ENCODE measurements at regions of chr6 and their contacts with region 1.

Region 1: GRCh38 chr6:97508646-97509045 is 225.6 kb upstream of the MMS22L start:
- DNase-seq: no peak
- H3K4me3 ChIP-seq: no peak overlapping the region
- H3K27ac ChIP-seq: no peak overlapping the region
- H3K4me1 ChIP-seq: no peaks in the 10 kb centered on the region
- H3K27me3 ChIP-seq: no peaks in the 10 kb centered on the region
- CTCF ChIP-seq: no peak
- EP300 ChIP-seq: no peak
- POLR2A ChIP-seq: no peak
- RAD21 ChIP-seq: no peak

Region 2: GRCh38 chr6:97497713-97498331 is 10.8 kb before region 1 on chr6:
- CTCF ChIA-PET with region 1: interaction called, 12 read pairs
- POLR2A ChIA-PET with region 1: no interaction called
- DNase-seq: peak; percentile 7 to 73
- H3K4me3 ChIP-seq: no peak overlapping the region
- H3K27ac ChIP-seq: no peak overlapping the region
- H3K4me1 ChIP-seq: no peaks in the 10 kb centered on the region
- H3K27me3 ChIP-seq: no peaks in the 10 kb centered on the region
- CTCF ChIP-seq: peak; percentile 66 to 89 (median 77)
- EP300 ChIP-seq: no peak
- POLR2A ChIP-seq: no peak
- RAD21 ChIP-seq: peak; percentile 77 to 82

Region 3: GRCh38 chr6:97524811-97525210 is 16.2 kb after region 1 on chr6:
- CTCF ChIA-PET with region 1: interaction called, 14 read pairs
- POLR2A ChIA-PET with region 1: no interaction called
- DNase-seq: peak; percentile 53 to 72
- H3K4me3 ChIP-seq: no peak overlapping the region
- H3K27ac ChIP-seq: no peak overlapping the region
- H3K4me1 ChIP-seq: peaks cover 0 to 5% (median 1%) of the 10 kb centered on the region in 4 experiments; a peak in 2 of 7 replicates
- H3K27me3 ChIP-seq: no peaks in the 10 kb centered on the region
- CTCF ChIP-seq: no peak
- EP300 ChIP-seq: no peak
- POLR2A ChIP-seq: no peak
- RAD21 ChIP-seq: no peak